A673 (cell line): ENCODE measurements at regions of chr22 and their contacts with region 1.

Region 1: DNA sequence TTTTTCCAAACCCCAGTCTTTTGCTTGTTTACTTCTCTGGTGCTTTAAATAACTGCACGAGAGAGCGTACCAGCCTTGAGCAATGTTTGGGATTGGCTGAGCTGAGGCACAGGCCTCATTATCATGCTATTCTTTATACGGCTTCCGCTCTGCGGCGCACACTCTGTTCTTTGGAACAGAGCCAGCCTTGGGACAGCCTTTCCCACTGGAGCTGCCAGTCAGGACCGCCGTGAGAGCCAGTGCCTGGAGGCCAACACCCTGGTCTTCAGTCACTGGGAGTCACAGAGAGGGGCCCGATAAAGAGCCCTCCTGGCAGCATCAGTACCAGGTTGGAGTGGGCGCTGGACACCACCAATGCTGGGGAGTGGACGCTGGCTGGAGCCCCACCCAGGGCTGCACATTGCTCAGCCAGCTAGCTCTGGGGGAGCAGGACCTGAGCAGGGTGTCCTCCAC is 125.6 kb downstream of the BCR start:
- DNase-seq: peak; percentile 91
- H3K4me3 ChIP-seq: no peak overlapping the region
- H3K27ac ChIP-seq: no peak overlapping the region
- H3K4me1 ChIP-seq: peaks cover 14% of the 10 kb centered on the region
- H3K27me3 ChIP-seq: no peaks in the 10 kb centered on the region
- CTCF ChIP-seq: no peak

Region 2: DNA sequence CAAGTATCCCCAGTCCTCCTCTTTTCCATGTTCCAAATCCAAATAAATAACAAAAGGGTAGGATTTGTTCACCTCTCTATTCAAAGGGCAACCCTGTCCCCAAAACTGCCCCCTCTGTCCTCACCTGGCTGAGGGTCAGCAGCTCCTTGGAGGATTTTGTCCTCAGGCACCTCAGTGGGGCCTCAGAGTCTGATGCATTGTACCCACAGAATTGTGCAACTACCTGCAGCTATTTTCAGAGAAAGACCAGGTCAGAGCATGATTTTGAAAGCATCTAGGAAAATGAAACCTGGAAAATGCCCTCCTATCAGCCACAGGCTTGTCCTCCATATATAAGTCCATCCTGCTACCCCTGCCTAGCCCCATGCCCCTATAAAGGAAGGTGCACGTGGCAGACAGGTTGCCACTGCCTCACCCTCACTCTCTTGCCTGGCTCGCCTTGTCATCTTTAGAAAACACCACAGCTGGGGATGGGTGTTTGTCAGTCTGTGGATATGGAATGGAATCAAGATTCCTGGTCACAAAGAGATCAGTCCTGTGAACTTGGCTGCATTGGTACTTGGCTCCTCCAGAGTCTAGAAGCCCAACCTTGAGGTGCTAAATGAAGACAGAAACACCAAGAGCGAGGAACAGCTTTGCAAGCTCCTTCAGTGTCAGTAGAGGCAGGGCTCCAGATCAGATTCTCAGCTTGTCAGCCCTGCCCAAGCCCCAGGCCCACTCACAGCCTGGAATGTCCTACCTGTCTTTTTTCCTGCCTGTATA is 62.9 kb after region 1 on chr22:
- CTCF ChIA-PET with region 1: no interaction called
- POLR2A ChIA-PET with region 1: no interaction called
- intact Hi-C with region 1: loop called (anchors 10 kb)
- DNase-seq: no peak
- H3K4me3 ChIP-seq: no peak overlapping the region
- H3K27ac ChIP-seq: no peak overlapping the region
- H3K4me1 ChIP-seq: no peaks in the 10 kb centered on the region
- H3K27me3 ChIP-seq: peaks cover 18% of the 10 kb centered on the region
- CTCF ChIP-seq: no peak

Region 3: DNA sequence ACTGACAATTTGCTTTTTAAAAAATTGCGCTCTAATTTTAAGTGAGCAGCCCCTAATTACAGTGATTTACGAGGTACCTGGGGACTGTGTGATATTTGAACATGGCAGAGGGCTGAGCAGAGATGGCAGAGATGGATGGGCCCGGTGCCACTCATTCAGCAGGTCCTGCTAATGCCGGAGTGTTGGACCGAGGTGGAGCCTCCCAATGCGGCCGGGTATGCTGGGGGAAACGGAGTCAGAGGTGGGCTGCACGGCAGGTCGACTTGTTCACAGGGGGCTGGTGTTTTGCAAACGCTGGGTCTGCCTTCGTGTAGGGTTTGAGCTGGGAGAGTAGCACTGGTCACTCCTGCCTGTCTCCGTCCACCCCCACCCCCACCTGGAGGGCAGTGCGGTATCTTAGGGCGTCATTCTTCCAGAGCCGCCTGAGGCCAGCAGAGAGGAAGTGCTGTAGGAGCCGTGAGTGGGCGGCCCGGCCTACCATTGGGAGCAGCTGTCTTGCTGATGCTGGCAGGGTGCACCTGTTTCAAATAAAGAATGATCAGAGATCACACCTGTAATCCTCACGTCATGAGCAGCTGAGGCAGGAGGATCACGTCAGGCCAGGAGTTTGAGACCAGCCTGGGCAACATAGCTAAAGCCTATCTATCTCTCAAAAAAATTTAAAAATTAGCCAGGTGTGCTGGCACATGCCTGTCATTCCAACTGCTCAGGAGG is 151.6 kb after region 1 on chr22:
- CTCF ChIA-PET with region 1: no interaction called
- POLR2A ChIA-PET with region 1: no interaction called
- intact Hi-C with region 1: no loop called
- DNase-seq: no peak
- H3K4me3 ChIP-seq: no peak overlapping the region
- H3K27ac ChIP-seq: no peak overlapping the region
- H3K4me1 ChIP-seq: no peaks in the 10 kb centered on the region
- H3K27me3 ChIP-seq: no peaks in the 10 kb centered on the region
- CTCF ChIP-seq: no peak

Region 4: DNA sequence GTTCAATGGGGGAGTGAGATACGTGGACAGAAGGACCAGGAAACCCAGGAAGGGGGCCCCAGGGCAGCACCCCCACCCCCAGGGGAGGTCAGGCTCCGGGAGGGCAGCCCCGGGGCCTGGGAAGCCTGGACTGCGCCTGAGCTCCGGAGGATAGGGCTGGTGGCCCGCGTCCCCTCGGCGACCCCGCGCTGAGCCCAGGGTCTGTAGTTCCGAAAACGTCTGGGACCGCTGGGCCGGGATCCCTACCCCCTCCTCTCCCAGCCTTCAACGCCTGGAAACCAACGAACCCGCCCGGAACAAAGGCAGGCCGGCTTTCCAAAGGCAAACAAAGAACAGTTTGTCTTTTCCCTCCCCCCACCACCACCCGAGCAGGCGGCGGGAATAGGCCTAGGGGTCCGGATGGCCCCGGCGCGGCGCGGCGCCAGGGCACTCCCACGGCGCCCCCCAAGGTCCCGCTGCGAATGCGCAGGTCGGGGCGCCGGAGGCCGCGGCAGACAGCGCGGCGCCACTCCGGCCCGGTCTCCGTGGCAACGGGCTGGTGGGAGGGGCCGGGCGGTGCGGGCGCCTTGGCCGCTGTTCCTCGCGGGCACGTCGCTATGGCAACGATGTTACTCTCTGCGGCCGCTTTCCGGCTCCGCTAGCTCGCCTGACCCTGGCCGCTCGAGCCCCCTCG is 215.6 kb after region 1 on chr22:
- CTCF ChIA-PET with region 1: no interaction called
- POLR2A ChIA-PET with region 1: no interaction called
- intact Hi-C with region 1: no loop called
- DNase-seq: peak; percentile 95
- H3K4me3 ChIP-seq: peak overlapping the region; percentile 45
- H3K27ac ChIP-seq: peak overlapping the region; percentile 97
- H3K4me1 ChIP-seq: peaks cover 28% of the 10 kb centered on the region
- H3K27me3 ChIP-seq: no peaks in the 10 kb centered on the region
- CTCF ChIP-seq: 0 out of 2 replicates have a peak, but pooled peaks have one; percentile 12